Dendritic cell treated with granulocyte-macrophage colony-stimulating factor and Interleukin-4, amounts not matched to agents 40 ng/mL and 50 ng/mL, for 4 days (primary cell): ENCODE measurements at regions of chr7 and their contacts with region 1.

Region 1: GRCh38 chr7:139203992-139204391 is 27.0 kb upstream of the UBN2 start:
- H3K4me3 Mint-ChIP-seq: no peak overlapping the region
- H3K27ac Mint-ChIP-seq: no peak overlapping the region
- H3K4me1 Mint-ChIP-seq: no peaks in the 10 kb centered on the region
- H3K27me3 Mint-ChIP-seq: no peaks in the 10 kb centered on the region

Region 2: GRCh38 chr7:139011373-139011772 is 192.6 kb before region 1 on chr7:
- intact Hi-C with region 1: no loop called
- H3K4me3 Mint-ChIP-seq: no peak overlapping the region
- H3K27ac Mint-ChIP-seq: no peak overlapping the region
- H3K4me1 Mint-ChIP-seq: no peaks in the 10 kb centered on the region
- H3K27me3 Mint-ChIP-seq: peaks cover 1% of the 10 kb centered on the region

Region 3: DNA sequence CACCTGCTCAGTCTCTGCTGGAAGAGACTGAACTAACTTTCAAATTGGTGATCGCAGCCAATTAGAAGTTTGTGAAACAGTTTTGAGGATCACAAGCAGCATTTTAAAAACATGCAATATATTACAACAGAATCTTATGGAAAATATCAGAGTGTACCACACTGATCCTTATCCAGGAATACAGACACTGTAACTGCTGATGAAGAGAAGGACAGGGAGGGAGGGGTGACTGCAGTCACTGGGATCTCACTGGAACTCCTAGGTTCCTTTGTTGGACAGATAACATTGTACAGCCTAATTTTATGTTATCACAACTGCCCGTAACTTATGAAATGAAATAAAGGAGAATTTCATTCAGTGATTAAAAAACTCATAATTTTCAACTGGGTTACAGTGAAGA is 20.2 kb after region 1 on chr7:
- intact Hi-C with region 1: loop called (anchors 1 kb)
- H3K4me3 Mint-ChIP-seq: no peak overlapping the region
- H3K27ac Mint-ChIP-seq: no peak overlapping the region
- H3K4me1 Mint-ChIP-seq: no peaks in the 10 kb centered on the region
- H3K27me3 Mint-ChIP-seq: peaks cover 2% of the 10 kb centered on the region